HAP-1 (cell line): ENCODE measurements at regions of chr3 and their contacts with region 1.

Region 1: DNA sequence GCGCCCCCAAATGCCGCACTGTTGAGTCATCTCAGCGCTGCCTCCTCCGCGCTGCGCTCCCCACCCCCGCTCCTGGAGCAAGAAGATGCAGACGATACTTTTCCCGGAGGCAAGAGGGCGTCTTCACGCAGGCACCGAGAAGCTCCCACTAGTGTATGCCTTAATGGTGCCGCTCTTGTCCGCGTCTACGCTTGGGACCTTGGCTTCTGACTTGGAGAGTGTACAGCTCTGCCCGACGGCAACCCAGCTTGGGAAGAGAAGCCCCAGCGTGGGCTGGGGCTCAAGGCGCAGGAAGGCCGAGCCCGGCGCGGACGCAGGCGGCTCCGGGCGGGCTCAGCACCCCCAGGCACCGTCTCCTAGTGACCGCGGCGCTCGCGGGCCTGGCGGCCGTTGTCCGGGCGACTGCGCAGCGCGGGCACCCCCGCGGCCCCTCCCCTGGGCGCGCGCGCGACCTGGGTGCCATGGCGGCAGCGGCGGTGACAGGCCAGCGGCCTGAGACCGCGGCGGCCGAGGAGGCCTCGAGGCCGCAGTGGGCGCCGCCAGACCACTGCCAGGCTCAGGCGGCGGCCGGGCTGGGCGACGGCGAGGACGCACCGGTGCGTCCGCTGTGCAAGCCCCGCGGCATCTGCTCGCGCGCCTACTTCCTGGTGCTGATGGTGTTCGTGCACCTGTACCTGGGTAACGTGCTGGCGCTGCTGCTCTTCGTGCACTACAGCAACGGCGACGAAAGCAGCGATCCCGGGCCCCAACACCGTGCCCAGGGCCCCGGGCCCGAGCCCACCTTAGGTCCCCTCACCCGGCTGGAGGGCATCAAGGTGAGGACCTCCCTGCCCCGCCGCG is at the start of gene P4HTM:
- DNase-seq: peak; percentile 67 to 87
- H3K4me3 ChIP-seq: peak within 1 kb of the TSS; percentile 60
- H3K4me1 ChIP-seq: peaks cover 10% of the 10 kb centered on the region
- H3K27me3 ChIP-seq: no peaks in the 10 kb centered on the region

Region 2: DNA sequence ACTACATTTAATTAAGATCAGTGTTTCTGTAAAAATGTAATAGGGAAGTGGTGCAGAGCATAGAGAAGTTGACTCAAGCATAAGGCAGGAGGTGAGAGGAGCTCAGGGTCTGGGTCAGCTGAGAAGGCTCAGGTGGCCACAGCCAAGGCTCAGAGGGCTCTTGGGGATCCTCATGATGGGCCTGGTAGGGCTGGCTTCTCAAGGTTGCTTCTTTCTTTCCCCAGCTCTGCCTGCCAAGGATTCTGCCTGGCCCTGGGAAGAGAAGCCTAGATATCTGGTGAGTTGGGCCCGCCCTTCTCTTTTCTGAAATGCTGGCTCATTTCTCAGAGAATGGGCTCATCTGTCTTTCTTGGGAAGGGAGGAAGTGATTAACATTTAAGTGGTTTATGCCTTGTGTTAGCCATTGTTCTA is 742.6 kb before region 1 on chr3:
- in situ Hi-C with region 1: no loop called
- DNase-seq: peak in 1 of 2 experiments; percentile 41
- H3K4me3 ChIP-seq: no peak overlapping the region
- H3K4me1 ChIP-seq: peaks cover 17% of the 10 kb centered on the region
- H3K27me3 ChIP-seq: no peaks in the 10 kb centered on the region

Region 3: DNA sequence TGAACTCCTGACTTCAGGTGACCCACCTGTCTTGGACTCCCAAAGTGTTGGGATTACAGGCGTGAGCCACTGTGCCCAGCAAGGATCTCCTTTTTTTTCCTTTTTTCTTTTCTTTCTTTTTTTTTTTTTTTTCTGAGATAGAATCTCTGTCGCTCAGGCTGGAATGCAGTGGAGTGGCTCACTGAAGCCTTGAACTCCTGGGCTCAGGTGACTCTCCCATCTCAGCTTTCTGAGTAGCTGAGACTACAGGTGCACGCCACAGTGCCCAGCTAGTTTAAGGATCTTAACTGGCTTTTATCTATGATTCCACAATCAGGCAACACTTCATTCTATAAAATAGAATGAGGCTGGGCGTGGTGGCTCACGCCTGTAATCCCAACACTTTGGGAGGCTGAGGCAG is 455.4 kb after region 1 on chr3:
- in situ Hi-C with region 1: loop called (anchors 10 kb)
- DNase-seq: no peak
- H3K4me3 ChIP-seq: no peak overlapping the region
- H3K4me1 ChIP-seq: peaks cover 9% of the 10 kb centered on the region; the same call in 1 of the 2 replicates
- H3K27me3 ChIP-seq: no peaks in the 10 kb centered on the region